K562 (cell line): ENCODE measurements at regions of chr22 and their contacts with region 1.

Region 1: GRCh38 chr22:17121227-17122195 is at the start of gene TMEM121B:
- DNase-seq: peak; percentile 41 to 81 (median 61)
- ATAC-seq: peak; percentile 49
- H3K4me3 ChIP-seq: peak within 1 kb of the TSS; percentile 26
- H3K27ac ChIP-seq: no peak within 1 kb of the TSS
- H3K4me1 ChIP-seq: peaks cover 0 to 25% of the 10 kb centered on the region in 2 experiments; a peak in 2 of 5 replicates
- H3K27me3 ChIP-seq: peaks cover 29 to 62% of the 10 kb centered on the region in 2 experiments
- CTCF ChIP-seq: no peak
- EP300 ChIP-seq: no peak
- POLR2A ChIP-seq: no peak
- RAD21 ChIP-seq: no peak
- polyA plus RNA-seq, gene TMEM121B: 0.03 TPM in 1 of 2 experiments, not detected in the other

Region 2: DNA sequence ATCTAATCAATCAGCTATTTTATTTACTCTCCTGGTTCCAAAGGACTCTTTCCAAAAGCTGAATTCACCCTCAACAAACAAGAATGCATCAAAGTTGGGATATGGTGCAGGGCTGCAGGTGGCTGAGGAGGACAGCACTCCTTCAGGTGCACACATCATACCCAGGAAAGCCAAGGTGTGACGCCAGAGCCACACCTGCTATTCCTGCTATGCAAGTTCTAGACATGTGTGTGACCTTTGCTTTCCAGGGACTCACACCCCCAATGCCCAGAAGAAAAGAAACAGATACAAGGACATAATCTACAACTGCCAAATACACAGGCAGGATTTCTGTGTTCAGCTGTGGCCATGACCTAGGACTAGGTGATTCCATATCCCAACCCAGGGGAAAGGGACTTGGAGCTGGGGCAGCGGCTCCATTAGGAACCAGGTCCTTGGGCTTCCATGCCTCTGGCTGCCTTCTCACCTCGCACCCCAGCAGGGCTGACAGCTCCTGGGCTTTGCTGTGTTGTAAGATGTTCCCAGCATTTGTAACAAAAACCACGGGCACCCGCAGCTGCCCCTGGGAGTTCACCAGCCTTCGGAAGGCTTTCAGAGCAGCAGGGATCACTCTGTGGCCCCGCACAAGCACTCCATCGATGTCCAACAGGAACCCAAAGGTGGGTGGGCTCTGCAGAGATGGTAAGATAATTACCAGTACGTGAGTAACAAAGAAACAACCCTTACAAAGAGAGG is 27.7 kb after region 1 on chr22:
- CTCF ChIA-PET with region 1: no interaction called
- POLR2A ChIA-PET with region 1: no interaction called
- in situ Hi-C with region 1: no loop called
- intact Hi-C with region 1: no loop called
- DNase-seq: no peak
- ATAC-seq: no peak
- H3K4me3 ChIP-seq: no peak overlapping the region
- H3K27ac ChIP-seq: no peak overlapping the region
- H3K4me1 ChIP-seq: no peaks in the 10 kb centered on the region
- H3K27me3 ChIP-seq: no peaks in the 10 kb centered on the region
- CTCF ChIP-seq: no peak
- EP300 ChIP-seq: no peak
- POLR2A ChIP-seq: no peak
- RAD21 ChIP-seq: no peak

Region 3: GRCh38 chr22:17199003-17199731 is 77.7 kb after region 1 on chr22:
- CTCF ChIA-PET with region 1: no interaction called
- POLR2A ChIA-PET with region 1: no interaction called
- in situ Hi-C with region 1: no loop called
- intact Hi-C with region 1: no loop called
- DNase-seq: peak in 1 of 4 experiments; percentile 11
- ATAC-seq: no peak
- H3K4me3 ChIP-seq: no peak overlapping the region
- H3K27ac ChIP-seq: no peak overlapping the region
- H3K4me1 ChIP-seq: peaks cover 3 to 5% of the 10 kb centered on the region in 2 experiments; a peak in 3 of 5 replicates
- H3K27me3 ChIP-seq: peaks cover 33 to 48% of the 10 kb centered on the region in 2 experiments
- CTCF ChIP-seq: no peak
- EP300 ChIP-seq: no peak
- POLR2A ChIP-seq: no peak
- RAD21 ChIP-seq: no peak

Region 4: DNA sequence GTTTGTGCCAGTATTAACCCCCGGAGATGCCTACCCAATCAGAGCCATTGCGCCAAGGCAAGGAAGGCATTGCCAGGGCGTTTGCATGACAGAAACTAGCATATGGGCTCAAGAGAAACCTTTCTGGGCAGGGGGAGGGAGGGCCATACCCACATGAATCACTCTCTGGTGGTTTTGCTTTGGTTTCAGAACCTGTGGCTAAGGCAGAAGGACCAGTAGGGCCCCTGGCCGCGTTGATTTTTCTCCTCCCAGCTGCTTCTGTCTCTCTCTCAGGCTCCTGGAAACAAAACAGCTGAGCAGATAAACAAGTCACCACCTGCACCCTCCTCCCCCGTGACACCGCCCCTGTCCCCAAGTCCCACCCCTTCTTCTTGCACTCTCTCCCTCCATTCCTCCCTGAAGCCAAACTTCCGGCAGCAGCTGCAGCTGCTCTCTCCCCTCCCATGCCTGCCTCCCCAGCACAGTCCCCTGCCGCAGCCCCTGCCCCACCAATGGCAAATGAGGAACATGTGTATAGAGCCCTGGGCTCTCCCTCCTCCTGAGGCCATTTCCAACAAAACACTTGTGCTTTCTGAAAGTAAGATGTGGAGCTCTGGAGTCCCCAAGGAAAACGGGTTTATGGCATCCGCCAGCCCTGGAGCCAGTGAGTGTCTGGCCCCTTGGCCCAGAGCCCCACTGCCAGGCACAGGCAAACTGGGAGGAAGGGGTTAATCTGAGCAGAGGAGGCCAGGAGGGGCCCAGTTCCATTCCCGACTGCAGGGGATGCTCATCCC is 136.7 kb after region 1 on chr22:
- CTCF ChIA-PET with region 1: no interaction called
- POLR2A ChIA-PET with region 1: no interaction called
- in situ Hi-C with region 1: no loop called
- intact Hi-C with region 1: no loop called
- DNase-seq: peak in 3 of 4 experiments; percentile 35 to 39 (median 39)
- ATAC-seq: peak; percentile 75
- H3K4me3 ChIP-seq: no peak overlapping the region
- H3K27ac ChIP-seq: no peak overlapping the region
- H3K4me1 ChIP-seq: no peaks in the 10 kb centered on the region
- H3K27me3 ChIP-seq: peaks cover 12 to 44% of the 10 kb centered on the region in 2 experiments
- CTCF ChIP-seq: no peak
- EP300 ChIP-seq: no peak
- POLR2A ChIP-seq: no peak
- RAD21 ChIP-seq: no peak

Region 5: DNA sequence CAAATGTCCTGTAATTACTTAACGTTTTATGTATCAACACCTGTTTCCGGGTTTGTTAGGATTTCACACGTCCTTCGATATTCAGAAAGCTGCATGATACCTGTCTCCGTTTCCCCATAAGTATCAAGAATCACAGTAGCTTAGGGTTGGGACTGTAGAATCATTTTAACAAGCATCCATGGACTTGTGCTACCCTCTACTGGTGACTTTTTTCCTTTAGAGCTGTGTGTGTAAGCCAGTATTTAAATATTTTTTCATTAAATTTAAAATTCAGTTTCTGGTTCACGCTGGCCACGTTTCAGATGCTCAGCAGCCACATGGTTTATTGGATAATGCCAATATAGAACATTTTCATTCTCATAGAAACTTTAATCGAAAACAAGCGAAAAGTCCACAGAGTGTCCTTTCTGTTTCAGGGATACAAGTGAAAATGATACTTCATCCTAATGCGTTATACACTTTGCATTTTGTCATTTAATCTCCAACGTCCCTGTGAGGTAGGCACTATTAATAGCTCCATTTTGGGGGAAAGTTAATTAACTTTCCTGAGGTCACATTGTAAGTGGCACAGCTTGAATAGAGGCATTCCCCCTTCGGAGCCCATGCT is 380.3 kb after region 1 on chr22:
- CTCF ChIA-PET with region 1: no interaction called
- POLR2A ChIA-PET with region 1: no interaction called
- in situ Hi-C with region 1: no loop called
- intact Hi-C with region 1: loop called (anchors 5 kb)
- DNase-seq: peak; percentile 51 to 75 (median 56)
- ATAC-seq: peak; percentile 91
- H3K4me3 ChIP-seq: no peak overlapping the region
- H3K27ac ChIP-seq: no peak overlapping the region
- H3K4me1 ChIP-seq: no peaks in the 10 kb centered on the region
- H3K27me3 ChIP-seq: peaks cover 17 to 31% of the 10 kb centered on the region in 2 experiments
- CTCF ChIP-seq: peak; percentile 67 to 95 (median 68); a peak in 5 of 6 replicates
- EP300 ChIP-seq: no peak
- POLR2A ChIP-seq: no peak
- RAD21 ChIP-seq: peak; percentile 87 to 96